Vagina (tissue), 2 donors: ENCODE measurements at regions of chr1 and their contacts with region 1.

Region 1: GRCh38 chr1:15128520-15129313 is 24.8 kb upstream of the TMEM51 start:
- DNase-seq: no peak
- H3K4me3 ChIP-seq: no peak overlapping the region
- H3K27ac ChIP-seq: no peak overlapping the region
- H3K4me1 ChIP-seq: no peaks in the 10 kb centered on the region
- H3K27me3 ChIP-seq: no peaks in the 10 kb centered on the region
- CTCF ChIP-seq: peak; percentile 86 to 91 (median 88)
- POLR2A ChIP-seq: no peak

Region 2: GRCh38 chr1:14996133-14997050 is 132.3 kb before region 1 on chr1:
- intact Hi-C with region 1: no loop called
- DNase-seq: no peak
- H3K4me3 ChIP-seq: no peak overlapping the region
- H3K27ac ChIP-seq: peak overlapping the region; percentile 72
- H3K4me1 ChIP-seq: peaks cover 20% of the 10 kb centered on the region
- H3K27me3 ChIP-seq: no peaks in the 10 kb centered on the region
- CTCF ChIP-seq: no peak
- POLR2A ChIP-seq: no peak

Region 3: GRCh38 chr1:15196807-15197530 is 68.3 kb after region 1 on chr1:
- intact Hi-C with region 1: no loop called
- DNase-seq: no peak
- H3K4me3 ChIP-seq: no peak overlapping the region
- H3K27ac ChIP-seq: no peak overlapping the region
- H3K4me1 ChIP-seq: peaks cover 22% of the 10 kb centered on the region
- H3K27me3 ChIP-seq: no peaks in the 10 kb centered on the region
- CTCF ChIP-seq: no peak
- POLR2A ChIP-seq: no peak

Region 4: DNA sequence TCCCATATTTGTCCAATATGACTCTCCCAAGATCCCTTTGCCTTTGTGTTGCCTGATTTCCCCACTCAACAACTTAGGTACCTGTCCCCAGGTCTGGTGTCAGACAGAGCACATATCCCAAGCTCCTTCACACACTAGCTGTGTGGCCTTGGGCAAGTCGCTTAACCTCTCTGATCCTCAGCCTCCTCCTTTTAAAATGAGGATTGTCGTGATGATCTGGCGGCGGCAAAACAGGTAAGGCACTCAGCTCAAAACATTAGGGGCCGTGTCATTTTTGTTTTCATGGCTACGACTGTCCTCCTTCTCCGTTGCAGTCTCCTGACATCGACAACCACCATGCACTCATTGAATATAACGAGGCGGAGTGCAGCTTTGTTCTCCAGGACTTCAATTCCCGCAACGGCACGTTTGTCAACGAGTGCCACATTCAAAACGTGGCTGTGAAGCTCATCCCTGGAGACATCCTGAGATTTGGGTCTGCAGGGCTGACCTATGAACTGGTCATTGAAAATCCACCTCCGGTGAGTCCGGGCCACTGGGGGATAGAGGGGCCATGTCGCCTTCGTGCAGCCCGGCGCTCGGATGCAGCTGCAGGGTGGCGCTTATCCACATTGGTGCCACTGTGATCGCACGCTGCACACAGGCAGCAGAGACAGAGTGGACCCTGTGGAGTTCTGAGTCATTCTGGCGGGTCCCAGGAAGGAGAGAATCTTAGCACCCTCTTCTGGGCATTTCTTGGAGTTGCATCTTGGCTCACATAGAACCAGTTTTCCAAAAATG is 143.5 kb after region 1 on chr1:
- intact Hi-C with region 1: loop called (anchors 5 kb)
- DNase-seq: peak in 1 of 2 donors; percentile 86
- H3K4me3 ChIP-seq: no peak overlapping the region
- H3K27ac ChIP-seq: no peak overlapping the region
- H3K4me1 ChIP-seq: no peaks in the 10 kb centered on the region
- H3K27me3 ChIP-seq: no peaks in the 10 kb centered on the region
- CTCF ChIP-seq: peak; percentile 59 to 89 (median 66)
- POLR2A ChIP-seq: no peak

Region 5: DNA sequence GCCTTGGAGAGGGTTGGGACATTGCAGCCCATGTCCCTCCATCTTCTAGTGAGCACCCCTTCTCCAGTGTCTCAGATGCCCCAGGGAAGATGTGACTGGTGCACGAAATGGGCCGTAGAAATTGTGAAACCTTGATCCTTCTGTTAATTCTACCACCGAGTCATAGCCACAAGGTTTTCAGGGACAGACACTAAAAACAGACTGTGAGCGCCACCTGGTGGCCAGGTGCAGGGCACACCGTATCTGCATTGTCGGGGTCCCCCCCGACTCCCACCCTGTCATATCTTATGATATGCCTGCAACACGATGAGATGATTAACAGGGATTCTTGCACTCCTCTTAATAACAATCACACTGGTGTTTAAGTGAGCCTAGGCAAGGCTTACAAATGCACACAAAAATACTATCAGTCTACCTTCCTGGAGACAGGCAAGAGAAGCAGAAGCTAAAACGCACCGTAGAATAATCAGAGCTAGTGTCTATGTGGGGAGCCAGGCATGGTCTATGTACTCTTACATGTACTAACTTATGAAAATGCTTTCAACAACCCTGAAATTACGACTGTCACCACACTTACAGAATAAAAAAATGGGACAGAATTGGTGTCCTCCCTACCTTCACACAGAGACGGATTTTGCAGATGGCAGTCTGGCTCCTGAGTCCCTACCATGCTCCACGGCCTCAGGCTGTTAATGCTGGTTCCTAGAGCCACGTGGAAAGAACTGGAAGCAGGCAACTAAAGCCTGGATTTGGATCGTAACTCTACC is 176.2 kb after region 1 on chr1:
- intact Hi-C with region 1: loop called (anchors 5 kb)
- DNase-seq: no peak
- H3K4me3 ChIP-seq: no peak overlapping the region
- H3K27ac ChIP-seq: no peak overlapping the region
- H3K4me1 ChIP-seq: no peaks in the 10 kb centered on the region
- H3K27me3 ChIP-seq: no peaks in the 10 kb centered on the region
- CTCF ChIP-seq: peak; percentile 79 to 82 (median 80)
- POLR2A ChIP-seq: no peak

Region 6: DNA sequence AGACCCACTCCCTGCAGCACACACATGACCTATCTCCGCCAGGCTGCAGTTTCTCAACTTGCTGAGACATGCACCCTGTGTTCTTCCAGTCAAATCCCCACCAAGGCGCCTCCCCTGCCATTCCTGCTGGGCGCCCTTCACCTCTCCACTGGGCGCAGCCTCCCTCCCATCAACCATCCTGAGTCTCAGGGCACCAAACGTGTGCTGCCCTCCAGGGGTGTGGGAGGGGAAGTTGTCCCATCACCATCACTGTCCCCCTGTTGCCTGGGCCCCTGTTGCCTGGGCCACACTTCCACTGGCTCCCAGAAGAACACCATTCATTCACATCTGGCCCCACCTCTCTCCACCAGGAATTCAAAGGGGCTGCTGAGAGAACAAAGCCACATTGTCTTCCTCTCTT is 236.0 kb after region 1 on chr1:
- intact Hi-C with region 1: no loop called
- DNase-seq: no peak
- H3K4me3 ChIP-seq: no peak overlapping the region
- H3K27ac ChIP-seq: no peak overlapping the region
- H3K4me1 ChIP-seq: no peaks in the 10 kb centered on the region
- H3K27me3 ChIP-seq: no peaks in the 10 kb centered on the region
- CTCF ChIP-seq: no peak
- POLR2A ChIP-seq: no peak